ENCODE measurements at regions of chr10 and their contacts with region 1.

Region 1: GRCh38 chr10:97445722-97446639 is at the starts of genes EXOSC1 and ZDHHC16:
- DNase-seq: peak; percentile 97
- ATAC-seq: peak; percentile 96
- H3K4me3 ChIP-seq: peak within 1 kb of the TSS; percentile 84
- H3K27ac ChIP-seq: peak within 1 kb of the TSS; percentile 72
- H3K4me1 ChIP-seq: peaks cover 5% of the 10 kb centered on the region; the same call in 1 of the 2 replicates
- H3K27me3 ChIP-seq: no peaks in the 10 kb centered on the region
- CTCF ChIP-seq: peak; percentile 20; the same call in 1 of the 2 replicates
- POLR2A ChIP-seq: peak; percentile 74
- RAD21 ChIP-seq: peak; percentile 13; the same call in 1 of the 2 replicates
- total RNA-seq, gene EXOSC1: 47.2 and 51.6 TPM in 2 replicates
- total RNA-seq, gene ZDHHC16: 51.7 and 64.0 TPM in 2 replicates

Region 2: DNA sequence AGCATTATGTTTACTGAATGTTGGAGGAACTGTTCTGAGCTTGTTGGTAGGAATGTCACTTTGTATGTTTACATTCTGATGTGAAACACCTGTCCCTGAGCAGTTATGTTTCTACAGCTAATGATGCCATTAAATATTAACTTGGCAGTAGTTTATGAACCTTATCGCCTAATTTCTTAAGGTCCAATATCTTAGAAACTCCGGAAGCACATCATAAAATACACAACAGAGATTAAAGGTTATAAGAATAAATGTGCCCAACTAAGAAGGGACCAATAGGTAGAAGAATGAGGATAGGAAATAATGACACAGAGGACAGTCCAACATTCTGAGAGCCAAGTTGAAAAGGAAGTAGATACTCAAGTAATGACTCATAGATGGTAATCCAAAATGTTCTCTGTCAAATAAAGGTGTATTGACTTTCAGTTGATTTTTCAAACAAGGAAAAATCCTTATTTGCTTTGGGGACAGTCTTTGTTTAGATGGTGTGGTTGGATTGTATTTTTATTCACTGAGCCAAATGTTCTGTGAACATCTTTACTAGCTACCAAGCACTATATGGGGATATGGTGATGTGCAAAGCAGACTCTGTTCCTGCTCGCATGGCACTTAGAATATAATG is 581.9 kb before region 1 on chr10:
- CTCF ChIA-PET with region 1: no interaction called
- POLR2A ChIA-PET with region 1: no interaction called
- dilution Hi-C with region 1: no loop called
- in situ Hi-C with region 1: no loop called
- intact Hi-C with region 1: no loop called
- DNase-seq: peak; percentile 40
- ATAC-seq: peak; percentile 62
- H3K4me3 ChIP-seq: no peak overlapping the region
- H3K27ac ChIP-seq: no peak overlapping the region
- H3K4me1 ChIP-seq: peaks cover 6% of the 10 kb centered on the region; the same call in 1 of the 2 replicates
- H3K27me3 ChIP-seq: no peaks in the 10 kb centered on the region
- CTCF ChIP-seq: no peak
- POLR2A ChIP-seq: no peak
- RAD21 ChIP-seq: no peak

Region 3: DNA sequence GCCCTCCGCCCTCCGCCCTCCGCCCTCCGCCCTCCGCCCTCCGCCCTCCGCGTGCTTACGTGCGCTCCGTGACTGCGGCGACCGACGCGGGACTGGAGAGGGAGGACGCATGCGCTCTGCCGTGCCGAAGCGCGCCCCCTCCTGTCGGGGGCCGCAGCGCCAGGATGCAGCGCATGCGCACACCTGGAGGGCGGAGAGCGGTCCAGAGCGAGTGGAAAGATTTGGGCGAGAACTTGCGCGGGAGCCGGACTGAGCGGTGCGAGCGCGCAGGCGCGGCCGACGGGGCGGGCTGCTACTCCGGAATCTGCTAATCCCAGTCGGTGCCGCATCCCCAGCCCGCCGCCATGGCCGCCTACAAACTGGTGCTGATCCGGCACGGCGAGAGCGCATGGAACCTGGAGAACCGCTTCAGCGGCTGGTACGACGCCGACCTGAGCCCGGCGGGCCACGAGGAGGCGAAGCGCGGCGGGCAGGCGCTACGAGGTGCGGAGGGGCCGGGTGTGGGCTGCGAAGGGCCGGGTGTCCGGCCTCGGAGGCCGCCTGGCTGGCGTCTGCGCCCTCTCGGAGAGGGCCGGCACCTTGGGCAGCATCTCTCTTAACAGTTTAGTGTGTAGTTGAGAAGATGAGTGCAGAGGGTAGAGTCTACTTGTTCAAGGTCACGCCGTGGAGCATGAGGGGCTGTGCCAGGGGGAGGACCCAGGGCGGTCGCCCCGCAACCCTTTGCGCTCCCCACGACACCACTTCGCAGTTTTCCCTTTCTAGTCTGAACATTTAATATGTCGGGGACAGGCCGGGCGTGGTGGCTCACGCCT is 19.8 kb before region 1 on chr10 and contains the start of gene PGAM1:
- CTCF ChIA-PET with region 1: no interaction called
- POLR2A ChIA-PET with region 1: no interaction called
- dilution Hi-C with region 1: no loop called
- in situ Hi-C with region 1: no loop called
- intact Hi-C with region 1: loop called (anchors 2 kb)
- DNase-seq: peak; percentile 95
- ATAC-seq: peak; percentile 86
- H3K4me3 ChIP-seq: peak within 1 kb of the TSS; percentile 97
- H3K27ac ChIP-seq: peak within 1 kb of the TSS; percentile 96
- H3K4me1 ChIP-seq: peaks cover 12% of the 10 kb centered on the region
- H3K27me3 ChIP-seq: no peaks in the 10 kb centered on the region
- CTCF ChIP-seq: peak; percentile 90
- POLR2A ChIP-seq: peak; percentile 51; the same call in 1 of the 2 replicates
- RAD21 ChIP-seq: no peak; the same call in 1 of the 2 replicates
- total RNA-seq, gene PGAM1: 716 and 841 TPM in 2 replicates

Measured in IMR-90 (cell line).